PC-9 (cell line): ENCODE measurements at regions of chr16 and their contacts with region 1.

Region 1: DNA sequence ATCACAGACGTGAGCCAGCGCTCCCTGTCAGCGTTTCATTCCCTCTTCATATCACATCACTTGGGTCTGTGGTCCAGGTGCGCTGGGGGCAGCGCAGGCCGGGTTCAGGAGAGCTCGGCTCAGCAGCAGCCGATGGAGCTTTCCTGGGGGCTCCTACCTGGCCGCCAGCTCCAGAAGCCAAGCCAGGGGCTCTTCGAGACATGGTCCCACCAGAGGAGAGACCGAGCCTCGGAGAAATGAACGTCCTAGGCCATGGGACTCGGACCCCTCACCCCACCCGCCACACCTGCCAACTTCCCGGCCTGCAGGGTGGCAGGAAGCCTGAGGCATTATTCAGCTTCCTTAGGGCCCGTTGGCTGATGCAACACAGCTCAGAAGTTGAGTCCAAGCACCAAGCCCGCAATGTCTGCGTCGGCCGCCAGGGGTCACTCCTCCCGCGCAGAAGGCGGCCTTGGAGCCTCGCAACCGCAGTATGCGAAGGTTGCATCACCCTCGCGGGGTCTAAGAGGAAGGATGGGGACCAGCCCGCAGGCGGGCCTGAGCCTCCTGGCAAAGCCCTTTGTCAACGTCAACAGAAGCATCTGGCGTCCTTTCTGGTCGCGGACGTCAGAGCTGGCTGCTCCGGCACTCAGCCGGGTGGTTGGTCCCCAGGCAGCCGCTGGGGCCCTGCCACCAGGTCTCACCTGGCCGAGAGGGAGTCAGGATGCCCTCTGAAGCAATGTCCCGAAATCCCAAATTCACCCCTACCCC is 13.2 kb upstream of the KLHDC4 start:
- DNase-seq: peak; percentile 84 to 96
- H3K4me3 ChIP-seq: peak overlapping the region; percentile 30; the same call in 1 of the 2 replicates
- H3K27ac ChIP-seq: peak overlapping the region; percentile 89
- H3K4me1 ChIP-seq: peaks cover 19% of the 10 kb centered on the region
- H3K27me3 ChIP-seq: no peaks in the 10 kb centered on the region
- CTCF ChIP-seq: peak; percentile 88

Region 2: DNA sequence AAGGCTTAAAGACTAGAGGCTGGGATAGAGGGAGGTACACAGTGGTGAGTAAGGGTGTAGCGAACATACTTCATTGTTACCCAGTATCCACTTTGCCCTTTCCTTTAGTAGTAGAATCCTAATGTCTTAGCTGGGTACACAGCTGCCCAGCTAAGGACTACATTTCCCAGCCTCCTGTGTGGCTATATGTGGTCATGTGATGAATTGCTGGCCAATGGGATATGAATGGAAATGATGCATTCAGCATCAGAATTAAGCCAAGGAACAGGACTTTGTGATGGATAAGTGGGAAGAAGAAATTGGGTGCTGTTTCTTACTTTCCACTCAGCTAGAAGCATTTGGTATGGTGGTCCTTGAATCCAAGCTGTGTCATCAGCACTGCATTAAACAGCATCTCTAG is 1144.7 kb before region 1 on chr16:
- CTCF ChIA-PET with region 1: no interaction called
- POLR2A ChIA-PET with region 1: no interaction called
- intact Hi-C with region 1: no loop called
- DNase-seq: no peak
- H3K4me3 ChIP-seq: no peak overlapping the region
- H3K27ac ChIP-seq: no peak overlapping the region
- H3K4me1 ChIP-seq: no peaks in the 10 kb centered on the region
- H3K27me3 ChIP-seq: peaks cover 100% of the 10 kb centered on the region
- CTCF ChIP-seq: no peak

Region 3: DNA sequence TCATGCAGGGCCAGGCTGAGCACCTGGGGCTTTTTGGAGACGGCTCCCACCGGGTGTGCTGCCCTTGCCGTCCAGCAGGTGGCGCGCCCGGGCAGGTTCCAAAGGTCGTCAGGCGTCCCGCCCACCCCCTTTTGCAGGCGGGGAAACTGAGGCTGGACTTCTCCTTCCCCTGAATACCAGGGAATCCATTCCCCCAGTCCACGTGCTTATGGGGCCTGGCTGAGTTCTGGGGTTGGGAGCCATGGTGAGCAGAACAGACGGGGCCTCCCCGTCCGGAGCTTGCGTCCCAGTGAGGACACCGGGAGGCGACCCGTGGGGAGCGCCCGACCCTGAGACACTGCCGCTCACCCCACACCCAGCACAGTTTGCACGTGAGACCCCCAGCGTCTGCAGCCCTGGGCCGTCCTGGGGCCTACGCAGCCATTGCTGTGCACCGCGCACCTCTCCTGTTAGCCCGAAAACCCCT is 228.5 kb before region 1 on chr16:
- CTCF ChIA-PET with region 1: no interaction called
- POLR2A ChIA-PET with region 1: no interaction called
- intact Hi-C with region 1: no loop called
- DNase-seq: peak in 1 of 2 experiments; percentile 41
- H3K4me3 ChIP-seq: no peak overlapping the region
- H3K27ac ChIP-seq: no peak overlapping the region
- H3K4me1 ChIP-seq: no peaks in the 10 kb centered on the region
- H3K27me3 ChIP-seq: peaks cover 83% of the 10 kb centered on the region
- CTCF ChIP-seq: peak; percentile 99

Region 4: GRCh38 chr16:87641721-87642120 is 137.3 kb before region 1 on chr16:
- CTCF ChIA-PET with region 1: no interaction called
- POLR2A ChIA-PET with region 1: no interaction called
- intact Hi-C with region 1: no loop called
- DNase-seq: no peak
- H3K4me3 ChIP-seq: no peak overlapping the region
- H3K27ac ChIP-seq: no peak overlapping the region
- H3K4me1 ChIP-seq: no peaks in the 10 kb centered on the region
- H3K27me3 ChIP-seq: peaks cover 77% of the 10 kb centered on the region
- CTCF ChIP-seq: no peak

Region 5: GRCh38 chr16:87765776-87766484 is 13.1 kb before region 1 on chr16 and contains the start of gene KLHDC4:
- CTCF ChIA-PET with region 1: interaction called, 10 read pairs
- POLR2A ChIA-PET with region 1: no interaction called
- intact Hi-C with region 1: no loop called
- DNase-seq: peak; percentile 78 to 82
- H3K4me3 ChIP-seq: peak within 1 kb of the TSS; percentile 90
- H3K27ac ChIP-seq: peak within 1 kb of the TSS; percentile 52
- H3K4me1 ChIP-seq: peaks cover 11% of the 10 kb centered on the region; the same call in 1 of the 2 replicates
- H3K27me3 ChIP-seq: no peaks in the 10 kb centered on the region
- CTCF ChIP-seq: no peak
- total RNA-seq, gene KLHDC4: 66.5 and 74.2 TPM in 2 replicates

Region 6: DNA sequence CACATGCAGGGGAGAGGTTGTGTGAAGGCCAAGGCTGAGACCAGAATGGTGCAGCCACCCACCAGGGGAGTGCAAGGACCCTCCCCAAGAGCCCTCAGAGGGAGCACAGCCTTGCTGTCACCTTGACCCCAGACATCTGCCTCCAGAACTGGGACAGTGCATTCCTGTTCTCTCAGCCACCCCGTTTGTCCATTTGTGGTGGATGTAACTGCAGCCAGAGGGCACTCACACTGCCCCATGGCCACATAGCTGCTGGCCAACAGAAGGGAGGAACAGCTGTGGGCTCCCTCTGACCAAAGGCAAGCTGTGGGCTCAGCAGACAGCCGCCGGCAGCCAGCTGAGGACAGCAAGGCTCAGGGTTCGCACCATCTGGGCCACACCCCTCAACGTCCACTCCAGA is 36.6 kb after region 1 on chr16:
- CTCF ChIA-PET with region 1: no interaction called
- POLR2A ChIA-PET with region 1: no interaction called
- intact Hi-C with region 1: no loop called
- DNase-seq: no peak
- H3K4me3 ChIP-seq: no peak overlapping the region
- H3K27ac ChIP-seq: no peak overlapping the region
- H3K4me1 ChIP-seq: no peaks in the 10 kb centered on the region
- H3K27me3 ChIP-seq: no peaks in the 10 kb centered on the region
- CTCF ChIP-seq: no peak

Region 7: DNA sequence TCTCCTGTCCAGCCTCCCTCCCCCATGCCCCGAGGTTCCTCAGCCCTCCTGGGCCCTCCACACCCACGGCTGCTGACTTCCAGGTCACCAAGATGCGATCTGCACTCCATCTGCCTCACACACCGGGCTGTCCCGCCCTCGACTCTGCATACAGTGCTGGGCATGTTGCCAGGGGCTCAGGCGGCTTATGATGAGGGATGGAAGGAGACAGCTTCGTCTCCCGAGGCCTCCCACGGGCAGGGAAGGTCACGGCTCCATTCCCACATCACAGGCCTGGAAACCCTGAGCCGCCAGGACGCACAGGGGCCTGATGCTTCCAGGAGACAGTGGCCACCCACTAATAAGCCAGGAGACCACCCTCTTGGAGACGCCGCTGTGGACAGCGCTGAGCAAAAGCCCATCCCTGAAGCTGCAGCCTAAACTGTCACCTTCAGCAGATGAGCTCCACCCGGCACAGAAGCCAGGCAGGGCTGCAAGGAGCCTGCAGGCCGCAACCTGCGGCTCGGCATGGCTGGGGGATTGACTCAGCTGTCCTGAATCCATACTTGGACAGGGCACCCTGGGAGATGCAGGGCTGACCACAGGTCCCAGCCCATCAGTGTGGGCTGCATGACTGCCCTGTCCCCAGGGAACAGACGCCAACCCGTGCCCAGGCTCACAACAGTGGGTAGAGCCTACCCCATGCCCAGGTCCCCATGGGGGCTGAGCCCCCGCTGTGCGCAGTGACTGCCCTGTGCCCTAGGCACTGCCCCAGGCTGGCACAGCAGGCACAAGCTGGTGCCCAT is 55.8 kb after region 1 on chr16:
- CTCF ChIA-PET with region 1: no interaction called
- POLR2A ChIA-PET with region 1: no interaction called
- intact Hi-C with region 1: loop called (anchors 5 kb)
- DNase-seq: peak in 1 of 2 experiments; percentile 49
- H3K4me3 ChIP-seq: no peak overlapping the region
- H3K27ac ChIP-seq: no peak overlapping the region
- H3K4me1 ChIP-seq: no peaks in the 10 kb centered on the region
- H3K27me3 ChIP-seq: no peaks in the 10 kb centered on the region
- CTCF ChIP-seq: no peak

Region 8: DNA sequence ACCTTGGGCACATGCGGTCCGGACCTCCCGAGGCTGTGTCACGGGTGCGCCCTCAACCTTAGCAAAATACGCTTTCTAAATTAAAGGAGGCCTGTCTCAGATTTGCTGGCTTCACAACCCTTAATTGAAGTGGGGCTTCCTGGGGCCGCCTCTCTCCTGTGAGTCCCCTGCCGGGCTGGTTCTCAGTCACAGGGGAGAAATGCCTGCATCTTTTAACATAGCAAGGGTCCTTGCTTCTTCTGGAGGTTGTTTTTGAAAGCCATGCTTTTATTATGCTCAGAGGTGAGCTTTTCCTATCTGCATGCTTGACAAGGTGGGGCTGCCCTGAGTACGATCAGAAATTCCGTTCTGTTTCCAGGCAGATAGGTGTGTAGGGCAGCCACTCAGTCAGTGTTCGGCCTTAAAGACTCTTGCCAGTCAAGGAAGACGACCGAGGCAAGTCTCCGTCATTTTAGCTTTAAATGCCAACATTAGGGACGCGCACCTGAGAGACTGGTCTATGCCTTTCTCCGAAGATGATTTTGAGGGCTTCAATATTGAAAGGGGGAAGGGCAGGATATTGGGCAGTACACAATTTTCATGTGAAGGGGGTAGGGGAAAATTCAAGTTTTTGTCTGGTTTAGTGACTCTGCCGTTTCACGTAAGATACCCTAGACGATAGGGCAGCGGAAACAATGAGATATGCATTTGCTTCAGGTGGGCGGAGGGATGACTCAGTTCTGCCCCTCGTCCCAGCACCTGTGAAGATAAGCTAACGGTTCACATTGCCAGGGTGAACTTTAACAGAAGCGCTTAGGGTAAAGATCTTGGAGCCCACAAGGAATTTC is 95.8 kb after region 1 on chr16:
- CTCF ChIA-PET with region 1: interaction called, 37 read pairs
- POLR2A ChIA-PET with region 1: interaction called, 8 read pairs
- intact Hi-C with region 1: loop called (anchors 1 kb)
- DNase-seq: no peak
- H3K4me3 ChIP-seq: no peak overlapping the region
- H3K27ac ChIP-seq: no peak overlapping the region
- H3K4me1 ChIP-seq: peaks cover 28% of the 10 kb centered on the region
- H3K27me3 ChIP-seq: no peaks in the 10 kb centered on the region
- CTCF ChIP-seq: no peak

Region 9: GRCh38 chr16:89193021-89193575 is 1414.1 kb after region 1 on chr16:
- CTCF ChIA-PET with region 1: no interaction called
- POLR2A ChIA-PET with region 1: interaction called, 18 read pairs
- intact Hi-C with region 1: no loop called
- DNase-seq: peak in 1 of 2 experiments; percentile 43
- H3K4me3 ChIP-seq: no peak overlapping the region
- H3K27ac ChIP-seq: no peak overlapping the region
- H3K4me1 ChIP-seq: no peaks in the 10 kb centered on the region
- H3K27me3 ChIP-seq: no peaks in the 10 kb centered on the region
- CTCF ChIP-seq: no peak